Mammary epithelial cell (primary cell): ENCODE measurements at regions of chr7 and their contacts with region 1.

Region 1: DNA sequence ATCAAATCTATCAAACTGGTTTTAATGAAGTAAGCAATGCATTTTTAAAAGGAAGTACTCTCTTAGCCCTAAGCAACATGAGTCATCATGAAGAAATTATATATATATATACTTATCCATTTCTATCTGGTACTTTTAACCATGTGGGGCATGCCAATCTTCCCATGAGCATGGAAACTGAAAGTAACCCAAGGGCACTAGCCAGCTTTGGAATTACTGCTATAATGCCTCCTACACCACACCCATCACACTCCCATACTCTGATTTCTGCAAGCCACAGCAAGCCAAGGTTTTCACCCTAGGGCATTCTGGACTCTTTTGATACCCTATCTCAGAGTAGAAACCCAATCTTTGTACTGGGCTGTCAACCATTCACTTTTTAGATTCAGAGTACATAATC is 204.6 kb downstream of the IMMP2L start:
- DNase-seq: peak; percentile 80
- H3K4me3 ChIP-seq: peak overlapping the region in 1 of 3 experiments; percentile 12
- H3K27ac ChIP-seq: peak overlapping the region; percentile 11
- H3K4me1 ChIP-seq: peaks cover 22% of the 10 kb centered on the region
- H3K27me3 ChIP-seq: no peaks in the 10 kb centered on the region
- CTCF ChIP-seq: no peak

Region 2: DNA sequence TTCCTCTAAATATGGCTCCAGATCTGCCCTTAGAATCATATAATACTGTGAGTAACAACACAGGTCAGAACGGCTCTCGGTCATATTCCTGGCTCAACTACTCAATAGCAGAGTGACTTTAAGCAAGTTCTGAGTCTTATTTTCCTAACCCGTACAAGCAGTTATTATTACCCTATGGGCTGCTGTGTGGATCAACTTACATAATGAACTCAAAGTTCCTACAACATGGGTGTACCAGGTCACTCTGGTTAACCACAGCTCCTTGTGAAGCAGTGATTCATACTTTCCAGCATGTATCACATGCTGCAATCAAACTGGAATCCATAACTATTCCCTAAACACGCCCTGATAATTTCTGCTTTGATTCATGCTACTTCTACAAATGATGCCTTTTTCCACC is 159.4 kb before region 1 on chr7:
- CTCF ChIA-PET with region 1: no interaction called
- dilution Hi-C with region 1: no loop called
- in situ Hi-C with region 1: no loop called
- intact Hi-C with region 1: loop called (anchors 5 kb)
- DNase-seq: peak; percentile 99
- H3K4me3 ChIP-seq: no peak overlapping the region
- H3K27ac ChIP-seq: peak overlapping the region; percentile 62
- H3K4me1 ChIP-seq: peaks cover 17% of the 10 kb centered on the region
- H3K27me3 ChIP-seq: no peaks in the 10 kb centered on the region
- CTCF ChIP-seq: no peak

Region 3: DNA sequence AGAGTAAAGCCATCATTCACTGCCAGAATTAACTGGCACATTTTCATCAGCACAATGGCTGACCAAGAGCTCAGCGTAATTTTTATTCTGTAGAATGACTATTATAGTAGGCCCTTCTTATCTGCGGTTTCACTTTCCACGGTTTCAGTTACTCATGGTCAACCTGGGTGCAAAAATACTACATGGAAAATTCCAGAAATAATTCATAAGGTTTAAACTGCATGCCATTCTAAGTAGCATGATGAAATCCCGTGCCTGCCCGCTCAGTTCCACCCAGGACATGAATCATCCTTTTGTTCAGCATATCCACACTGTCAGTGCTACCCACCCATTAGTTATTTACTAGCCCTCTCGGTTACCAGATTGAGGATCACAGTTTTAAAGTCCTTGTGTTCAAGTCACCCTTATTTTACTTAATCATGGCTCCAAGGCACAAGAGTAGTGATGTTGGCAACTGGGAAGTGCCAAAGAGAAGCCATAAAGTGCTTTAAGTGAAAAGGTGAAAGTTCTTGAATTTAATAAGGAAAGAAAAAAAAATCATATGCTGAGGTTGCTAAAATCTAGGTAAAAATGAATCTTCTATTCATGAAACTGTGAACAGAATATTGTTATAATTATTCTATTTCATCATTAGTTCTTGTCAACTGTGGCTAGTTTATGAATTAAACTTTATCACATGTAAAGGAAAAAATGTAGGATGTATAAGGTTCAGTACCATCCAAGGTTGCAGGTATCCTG is 643.6 kb after region 1 on chr7:
- CTCF ChIA-PET with region 1: no interaction called
- dilution Hi-C with region 1: no loop called
- in situ Hi-C with region 1: no loop called
- intact Hi-C with region 1: loop called (anchors 5 kb)
- DNase-seq: peak; percentile 92
- H3K4me3 ChIP-seq: peak overlapping the region in 2 of 3 experiments; percentile 10 to 16
- H3K27ac ChIP-seq: peak overlapping the region; percentile 91
- H3K4me1 ChIP-seq: peaks cover 15% of the 10 kb centered on the region
- H3K27me3 ChIP-seq: no peaks in the 10 kb centered on the region
- CTCF ChIP-seq: no peak